ENCODE measurements at regions of chr11 and their contacts with region 1.

Region 1: DNA sequence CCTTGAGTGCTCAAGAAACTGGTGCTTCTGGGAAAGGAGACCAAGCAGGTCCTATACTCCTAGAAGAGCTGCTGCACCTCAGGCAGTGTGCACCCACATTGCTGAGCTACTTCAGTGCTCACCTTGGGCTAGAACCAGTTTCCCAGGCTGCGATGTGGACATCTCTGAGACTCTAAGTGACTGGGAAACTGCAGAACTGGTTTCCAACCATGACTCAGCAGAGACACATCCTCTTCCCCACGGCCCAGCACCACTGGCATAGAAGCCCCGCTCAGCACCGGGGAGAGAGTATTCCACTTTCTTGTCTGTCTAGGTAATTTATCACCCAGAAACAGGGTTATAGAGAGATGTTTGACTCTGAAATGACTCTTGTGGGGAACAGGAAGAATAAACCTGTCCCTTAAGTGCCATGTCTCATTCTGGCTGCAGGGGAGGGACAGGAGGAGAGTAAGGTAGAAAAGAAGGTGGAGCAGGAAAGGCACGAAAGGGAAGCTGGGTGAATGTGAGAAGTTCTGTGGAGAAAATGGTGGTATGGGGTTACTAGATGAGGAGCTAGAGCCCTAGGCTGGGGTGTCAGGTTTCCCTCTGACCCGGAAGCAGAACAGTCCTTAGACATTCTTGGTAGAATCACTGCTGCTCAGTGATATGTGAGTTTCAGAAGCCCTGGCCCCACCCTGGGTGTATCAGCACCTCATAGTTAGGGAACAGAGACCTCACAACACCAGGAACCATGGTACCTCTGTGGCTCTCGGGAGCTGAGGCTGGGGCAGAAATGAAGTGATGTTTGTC is 340.4 kb upstream of the NCAM1 start:
- DNase-seq: peak; percentile 45 to 93
- H3K4me3 ChIP-seq: peak overlapping the region; percentile 12; the same call in 1 of the 2 replicates
- H3K27ac ChIP-seq: peak overlapping the region; percentile 83
- H3K4me1 ChIP-seq: peaks cover 17% of the 10 kb centered on the region
- H3K27me3 ChIP-seq: no peaks in the 10 kb centered on the region
- CTCF ChIP-seq: no peak

Region 2: GRCh38 chr11:112440518-112440917 is 180.3 kb before region 1 on chr11:
- CTCF ChIA-PET with region 1: no interaction called
- POLR2A ChIA-PET with region 1: no interaction called
- intact Hi-C with region 1: no loop called
- DNase-seq: no peak
- H3K4me3 ChIP-seq: no peak overlapping the region
- H3K27ac ChIP-seq: no peak overlapping the region
- H3K4me1 ChIP-seq: no peaks in the 10 kb centered on the region
- H3K27me3 ChIP-seq: no peaks in the 10 kb centered on the region
- CTCF ChIP-seq: no peak

Region 3: DNA sequence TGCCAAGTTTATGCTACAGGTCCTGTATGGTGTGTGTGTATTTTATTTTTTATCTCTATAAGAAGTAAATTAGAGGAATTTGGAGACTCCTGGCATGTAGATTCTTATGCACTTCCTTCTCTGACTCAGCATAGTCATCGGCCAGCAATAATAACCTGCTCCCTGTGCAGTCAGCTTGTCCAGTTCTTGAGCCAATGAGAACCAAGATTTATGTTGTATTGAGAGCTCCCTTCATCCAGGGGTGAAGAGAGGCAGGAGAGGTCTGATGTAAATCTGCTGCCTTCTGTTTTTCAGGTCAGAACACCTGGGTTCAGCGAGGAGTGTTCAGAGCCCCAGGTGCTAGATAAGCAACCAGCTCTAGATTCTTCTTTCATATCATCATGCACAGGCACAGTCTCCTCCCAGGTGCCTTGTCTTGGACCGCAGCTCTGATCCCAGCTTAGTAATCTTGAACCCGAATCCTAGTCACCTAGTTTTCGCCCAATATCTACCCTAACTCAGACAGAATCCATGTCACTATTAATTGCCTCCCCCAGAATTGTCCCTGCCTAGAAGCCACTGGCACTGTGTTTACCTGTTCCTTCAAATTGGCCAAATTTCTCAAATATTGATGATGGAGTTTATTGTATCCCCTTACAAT is 12.2 kb after region 1 on chr11:
- CTCF ChIA-PET with region 1: interaction called, 12 read pairs
- POLR2A ChIA-PET with region 1: no interaction called
- intact Hi-C with region 1: no loop called
- DNase-seq: peak in 1 of 2 experiments; percentile 51
- H3K4me3 ChIP-seq: no peak overlapping the region
- H3K27ac ChIP-seq: no peak overlapping the region
- H3K4me1 ChIP-seq: peaks cover 6% of the 10 kb centered on the region
- H3K27me3 ChIP-seq: no peaks in the 10 kb centered on the region
- CTCF ChIP-seq: no peak

Region 4: DNA sequence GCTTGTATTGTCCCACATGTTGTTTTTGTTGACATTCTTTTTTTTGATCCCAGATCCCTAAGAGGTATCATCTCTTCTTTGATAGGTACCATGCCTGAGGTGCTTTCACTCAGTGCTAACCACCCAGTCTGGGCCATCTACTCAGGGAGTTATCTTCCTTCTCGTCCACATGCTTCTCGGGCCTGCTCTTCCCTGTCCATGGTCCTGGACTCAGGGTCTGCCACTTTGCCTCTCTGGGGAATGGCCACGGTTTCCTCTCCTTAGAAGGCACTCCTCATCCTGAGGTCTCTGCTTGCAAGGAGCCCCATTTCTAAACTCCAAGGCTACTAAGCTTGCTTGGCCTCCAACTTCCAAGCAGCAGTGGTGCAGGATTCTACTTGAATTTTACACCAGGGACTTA is 113.4 kb after region 1 on chr11:
- CTCF ChIA-PET with region 1: no interaction called
- POLR2A ChIA-PET with region 1: no interaction called
- intact Hi-C with region 1: no loop called
- DNase-seq: peak in 1 of 2 experiments; percentile 8
- H3K4me3 ChIP-seq: no peak overlapping the region
- H3K27ac ChIP-seq: no peak overlapping the region
- H3K4me1 ChIP-seq: no peaks in the 10 kb centered on the region
- H3K27me3 ChIP-seq: peaks cover 12% of the 10 kb centered on the region; the same call in 1 of the 2 replicates
- CTCF ChIP-seq: no peak